ENCODE measurements at regions of chr12 and their contacts with region 1.

Region 1: GRCh38 chr12:52121824-52122539 is 42.5 kb downstream of the SMIM41 start:
- DNase-seq: no peak
- ATAC-seq: peak; percentile 12
- H3K4me3 ChIP-seq: no peak overlapping the region
- H3K27ac ChIP-seq: peak overlapping the region; percentile 72
- H3K4me1 ChIP-seq: peaks cover 50% of the 10 kb centered on the region
- H3K27me3 ChIP-seq: no peaks in the 10 kb centered on the region
- CTCF ChIP-seq: peak; percentile 66 to 89 (median 78)
- EP300 ChIP-seq: no peak
- POLR2A ChIP-seq: no peak
- RAD21 ChIP-seq: peak; percentile 82

Region 2: DNA sequence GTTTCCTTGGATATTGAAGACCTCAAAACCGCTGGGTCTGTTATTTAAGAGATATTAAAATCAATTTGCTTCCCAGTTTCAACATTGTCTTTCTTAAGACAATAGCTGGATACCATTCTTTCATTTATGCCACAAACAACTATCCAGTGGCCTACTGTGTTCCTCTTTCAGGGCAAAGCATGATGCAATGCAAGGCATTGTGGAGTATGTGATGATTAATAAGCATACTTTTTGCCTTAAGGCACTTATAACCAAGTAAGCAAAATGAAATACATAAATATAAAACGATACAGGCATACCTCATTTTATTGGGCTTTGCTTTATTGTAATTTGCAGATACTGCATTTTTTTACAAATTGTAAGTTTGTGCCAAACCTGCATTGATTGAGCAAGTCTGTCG is 485.4 kb before region 1 on chr12:
- CTCF ChIA-PET with region 1: no interaction called
- POLR2A ChIA-PET with region 1: no interaction called
- RAD21 ChIA-PET with region 1: no interaction called
- SMC1A ChIA-PET with region 1: no interaction called
- in situ Hi-C with region 1: no loop called
- intact Hi-C with region 1: no loop called
- DNase-seq: no peak
- ATAC-seq: no peak
- H3K4me3 ChIP-seq: no peak overlapping the region
- H3K27ac ChIP-seq: no peak overlapping the region
- H3K4me1 ChIP-seq: no peaks in the 10 kb centered on the region
- H3K27me3 ChIP-seq: no peaks in the 10 kb centered on the region; a peak in 1 of 4 replicates
- CTCF ChIP-seq: no peak
- EP300 ChIP-seq: no peak
- POLR2A ChIP-seq: no peak
- RAD21 ChIP-seq: no peak

Region 3: GRCh38 chr12:51970904-51971646 is 150.9 kb before region 1 on chr12:
- CTCF ChIA-PET with region 1: interaction called, 18 read pairs
- POLR2A ChIA-PET with region 1: no interaction called
- RAD21 ChIA-PET with region 1: no interaction called
- SMC1A ChIA-PET with region 1: interaction called, 5 read pairs
- in situ Hi-C with region 1: no loop called
- intact Hi-C with region 1: no loop called
- DNase-seq: peak; percentile 93
- ATAC-seq: peak; percentile 97
- H3K4me3 ChIP-seq: no peak overlapping the region
- H3K27ac ChIP-seq: no peak overlapping the region
- H3K4me1 ChIP-seq: peaks cover 30% of the 10 kb centered on the region
- H3K27me3 ChIP-seq: peaks cover 0 to 8% of the 10 kb centered on the region in 2 experiments; a peak in 3 of 4 replicates
- CTCF ChIP-seq: peak; percentile 47 to 64 (median 60)
- EP300 ChIP-seq: peak; percentile 81 to 87; a peak in 3 of 4 replicates
- POLR2A ChIP-seq: no peak
- RAD21 ChIP-seq: 0 out of 2 replicates have a peak, but pooled peaks have one; percentile 8

Region 4: GRCh38 chr12:52004042-52004648 is 117.8 kb before region 1 on chr12:
- CTCF ChIA-PET with region 1: interaction called, 12 read pairs
- POLR2A ChIA-PET with region 1: interaction called, 9 read pairs
- RAD21 ChIA-PET with region 1: interaction called, 5 read pairs
- SMC1A ChIA-PET with region 1: interaction called, 3 read pairs
- in situ Hi-C with region 1: no loop called
- intact Hi-C with region 1: no loop called
- DNase-seq: no peak
- ATAC-seq: no peak
- H3K4me3 ChIP-seq: no peak overlapping the region
- H3K27ac ChIP-seq: no peak overlapping the region
- H3K4me1 ChIP-seq: peaks cover 11% of the 10 kb centered on the region
- H3K27me3 ChIP-seq: peaks cover 9 to 21% of the 10 kb centered on the region in 2 experiments; a peak in 3 of 4 replicates
- CTCF ChIP-seq: peak; percentile 37 to 68 (median 59); a peak in 5 of 6 replicates
- EP300 ChIP-seq: no peak
- POLR2A ChIP-seq: no peak
- RAD21 ChIP-seq: peak; percentile 56

Region 5: DNA sequence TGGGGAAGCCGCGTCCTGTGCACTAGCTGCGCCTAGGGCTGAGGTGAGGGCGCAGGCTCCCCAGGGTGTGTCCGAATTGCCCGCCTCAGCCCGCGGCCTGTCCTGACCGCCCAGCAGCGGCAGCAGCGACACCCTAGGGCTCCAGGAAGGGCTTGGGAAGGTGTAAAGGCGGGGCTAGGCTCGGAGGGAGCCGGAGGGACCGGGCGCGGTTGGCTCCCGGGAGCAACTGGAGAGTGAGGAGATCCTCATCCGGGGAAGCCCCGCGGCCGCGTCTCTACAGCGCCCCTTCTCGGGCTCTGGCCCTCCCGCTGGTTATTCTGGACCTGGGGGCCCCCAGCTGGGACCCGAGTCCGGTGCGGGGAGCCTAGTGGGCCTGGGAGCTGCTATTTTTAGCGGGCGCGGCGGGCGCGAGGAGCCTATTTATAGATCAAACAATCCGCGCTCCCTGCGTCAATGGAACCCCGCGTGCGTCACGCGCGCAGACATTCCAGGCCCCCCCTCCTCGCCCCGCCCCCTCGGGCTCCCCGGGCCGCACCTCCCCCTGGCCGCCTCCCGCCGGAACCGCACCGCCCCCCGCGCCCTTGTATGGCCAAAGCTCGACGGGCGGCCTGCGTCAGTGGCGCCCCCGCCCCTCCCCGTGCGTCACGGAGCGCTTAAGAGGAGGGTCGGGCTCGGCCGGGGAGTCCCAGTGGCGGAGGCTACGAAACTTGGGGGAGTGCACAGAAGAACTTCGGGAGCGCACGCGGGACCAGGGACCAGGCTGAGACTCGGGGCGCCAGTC is 71.0 kb before region 1 on chr12 and contains the start of gene NR4A1:
- CTCF ChIA-PET with region 1: interaction called, 6 read pairs
- POLR2A ChIA-PET with region 1: interaction called, 3 read pairs
- RAD21 ChIA-PET with region 1: interaction called, 14 read pairs
- SMC1A ChIA-PET with region 1: interaction called, 5 read pairs
- in situ Hi-C with region 1: no loop called
- intact Hi-C with region 1: no loop called
- DNase-seq: peak; percentile 49
- ATAC-seq: peak; percentile 85
- H3K4me3 ChIP-seq: peak within 1 kb of the TSS; percentile 76
- H3K27ac ChIP-seq: peak within 1 kb of the TSS; percentile 67
- H3K4me1 ChIP-seq: peaks cover 18% of the 10 kb centered on the region
- H3K27me3 ChIP-seq: no peaks in the 10 kb centered on the region
- CTCF ChIP-seq: peak in 2 of 3 experiments; percentile 5 to 31; a peak in 2 of 6 replicates
- EP300 ChIP-seq: peak; percentile 87 to 88
- POLR2A ChIP-seq: peak; percentile 85
- RAD21 ChIP-seq: no peak
- polyA plus RNA-seq, gene NR4A1: 0.05 TPM in 1 of 2 experiments, not detected in the other

Region 6: GRCh38 chr12:52082988-52083637 is 38.9 kb before region 1 on chr12:
- CTCF ChIA-PET with region 1: interaction called, 143 read pairs
- POLR2A ChIA-PET with region 1: interaction called, 6 read pairs
- RAD21 ChIA-PET with region 1: interaction called, 13 read pairs
- SMC1A ChIA-PET with region 1: interaction called, 62 read pairs
- in situ Hi-C with region 1: no loop called
- intact Hi-C with region 1: loop called (anchors 1 kb)
- DNase-seq: no peak
- ATAC-seq: peak; percentile 79
- H3K4me3 ChIP-seq: no peak overlapping the region
- H3K27ac ChIP-seq: no peak overlapping the region
- H3K4me1 ChIP-seq: peaks cover 16% of the 10 kb centered on the region
- H3K27me3 ChIP-seq: no peaks in the 10 kb centered on the region; a peak in 1 of 4 replicates
- CTCF ChIP-seq: peak; percentile 91 to 98 (median 98)
- EP300 ChIP-seq: no peak
- POLR2A ChIP-seq: no peak
- RAD21 ChIP-seq: peak; percentile 90

Region 7: DNA sequence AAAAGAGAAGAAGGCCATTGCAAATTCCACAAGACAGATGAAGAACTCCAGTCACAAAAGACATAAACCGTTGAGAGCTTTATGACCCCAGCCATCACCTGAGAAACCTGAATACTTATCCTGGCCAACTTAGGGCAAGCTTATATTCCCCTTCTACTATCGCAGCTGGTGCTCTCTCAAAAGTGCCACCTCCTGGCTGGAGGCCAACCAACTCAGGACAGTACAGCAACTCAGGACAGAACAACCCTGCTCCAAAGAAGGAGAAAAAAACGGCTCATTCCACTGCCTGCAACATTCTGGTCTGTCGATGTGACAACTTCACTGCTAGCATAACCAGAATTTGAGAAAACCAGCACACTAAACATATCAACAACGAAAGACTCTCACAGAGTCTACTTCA is 339.7 kb after region 1 on chr12:
- CTCF ChIA-PET with region 1: no interaction called
- POLR2A ChIA-PET with region 1: no interaction called
- RAD21 ChIA-PET with region 1: no interaction called
- SMC1A ChIA-PET with region 1: no interaction called
- in situ Hi-C with region 1: no loop called
- intact Hi-C with region 1: no loop called
- DNase-seq: no peak
- ATAC-seq: no peak
- H3K4me3 ChIP-seq: no peak overlapping the region
- H3K27ac ChIP-seq: no peak overlapping the region
- H3K4me1 ChIP-seq: no peaks in the 10 kb centered on the region
- H3K27me3 ChIP-seq: no peaks in the 10 kb centered on the region
- CTCF ChIP-seq: no peak
- EP300 ChIP-seq: no peak
- POLR2A ChIP-seq: no peak
- RAD21 ChIP-seq: no peak